Right lobe of liver (tissue), 6 donors: ENCODE measurements at regions of chr1 and their contacts with region 1.

Region 1: DNA sequence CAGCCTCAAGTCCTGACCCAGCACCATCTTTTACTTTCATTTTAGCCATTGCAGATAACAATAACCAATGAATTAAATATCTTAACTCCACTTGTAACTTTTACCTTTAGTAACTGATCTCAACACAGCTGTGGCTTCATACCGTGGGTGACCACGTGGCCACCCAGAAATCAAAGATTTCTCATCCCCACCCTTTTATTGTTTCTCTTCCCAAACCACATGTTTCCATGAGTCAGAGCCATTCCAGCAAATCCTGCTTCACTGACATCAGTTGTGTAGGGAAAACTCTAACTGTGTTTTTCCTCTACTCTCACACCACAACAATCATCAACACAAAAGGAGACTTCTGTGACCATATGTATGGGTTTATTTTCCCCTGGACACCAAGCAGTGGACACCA is 25.1 kb upstream of the BRDT start:
- DNase-seq: no peak
- ATAC-seq: no peak
- H3K4me3 ChIP-seq: no peak overlapping the region
- H3K27ac ChIP-seq: no peak overlapping the region
- H3K4me1 ChIP-seq: no peaks in the 10 kb centered on the region
- H3K27me3 ChIP-seq: no peaks in the 10 kb centered on the region
- CTCF ChIP-seq: no peak
- POLR2A ChIP-seq: no peak

Region 2: DNA sequence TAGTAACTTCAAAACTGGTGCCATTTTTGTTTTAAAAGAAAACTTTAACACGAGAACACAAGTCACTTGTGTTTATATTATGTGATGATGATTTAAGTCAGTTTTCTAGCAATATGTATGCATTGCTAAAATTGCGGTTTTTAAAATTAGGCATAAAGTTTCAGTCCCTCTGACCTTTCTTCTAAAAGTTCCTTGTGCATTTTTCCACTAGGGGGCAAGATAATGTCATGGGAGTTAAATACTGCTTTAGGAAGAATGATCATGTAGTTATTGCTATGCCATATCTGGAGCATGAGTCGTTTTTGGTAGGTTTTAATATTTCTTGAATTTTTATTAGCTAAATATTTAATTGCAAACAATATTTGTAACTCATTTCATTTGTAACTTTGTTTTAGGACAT is 412.8 kb before region 1 on chr1:
- intact Hi-C with region 1: loop called in 1 of 2 experiments (anchors 10 kb)
- DNase-seq: no peak
- ATAC-seq: peak; percentile 52 to 63 (median 58)
- H3K4me3 ChIP-seq: no peak overlapping the region
- H3K27ac ChIP-seq: no peak overlapping the region
- H3K4me1 ChIP-seq: no peaks in the 10 kb centered on the region
- H3K27me3 ChIP-seq: no peaks in the 10 kb centered on the region
- CTCF ChIP-seq: peak; percentile 55 to 66 (median 64)
- POLR2A ChIP-seq: no peak

Region 3: GRCh38 chr1:91529856-91530255 is 394.3 kb before region 1 on chr1:
- intact Hi-C with region 1: loop called in 1 of 2 experiments (anchors 10 kb)
- DNase-seq: no peak
- ATAC-seq: peak; percentile 47 to 70 (median 60)
- H3K4me3 ChIP-seq: no peak overlapping the region
- H3K27ac ChIP-seq: no peak overlapping the region
- H3K4me1 ChIP-seq: no peaks in the 10 kb centered on the region
- H3K27me3 ChIP-seq: no peaks in the 10 kb centered on the region
- CTCF ChIP-seq: peak; percentile 25 to 44 (median 33)
- POLR2A ChIP-seq: no peak

Region 4: GRCh38 chr1:91851130-91852010 is 72.8 kb before region 1 on chr1:
- intact Hi-C with region 1: no loop called
- DNase-seq: peak; percentile 83 to 92 (median 85)
- ATAC-seq: peak; percentile 92 to 94 (median 94)
- H3K4me3 ChIP-seq: peak overlapping the region in 1 of 3 donors; percentile 17
- H3K27ac ChIP-seq: peak overlapping the region in 2 of 3 donors; percentile 20 to 80
- H3K4me1 ChIP-seq: peaks cover 0 to 9% (median 2%) of the 10 kb centered on the region in 4 donors
- H3K27me3 ChIP-seq: no peaks in the 10 kb centered on the region
- CTCF ChIP-seq: no peak
- POLR2A ChIP-seq: no peak